PC-3 (cell line): ENCODE measurements at regions of chr4 and their contacts with region 1.

Region 1: DNA sequence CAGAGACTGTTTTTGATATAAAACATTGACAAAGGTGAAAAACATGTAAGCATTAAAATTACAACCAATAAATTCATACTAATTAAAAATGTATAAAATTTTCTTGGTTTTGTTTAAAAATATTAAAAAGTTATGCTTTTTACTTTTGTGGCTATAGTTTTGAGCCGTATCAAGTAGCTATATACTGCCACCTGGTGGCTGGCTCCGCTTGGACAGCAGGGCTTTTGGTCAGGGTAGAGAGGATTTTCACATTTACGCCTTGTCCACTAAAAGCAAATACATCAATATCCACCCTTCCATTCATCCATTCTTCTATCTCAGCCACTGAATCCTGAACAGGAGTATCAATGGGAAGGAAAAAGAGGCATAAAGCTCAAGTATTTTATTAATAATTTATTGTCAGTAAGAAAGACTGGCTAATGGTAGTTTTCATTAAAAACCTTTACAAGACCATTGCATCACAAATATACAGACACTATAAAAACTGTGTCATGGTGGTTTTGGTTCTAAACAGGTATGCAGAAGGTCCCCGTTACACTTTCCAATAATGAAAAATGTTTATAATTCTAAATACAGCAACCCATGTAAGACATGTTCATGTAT is 32.1 kb upstream of the MTNR1A start:
- DNase-seq: peak; percentile 54
- ATAC-seq: peak; percentile 65
- H3K4me3 ChIP-seq: no peak overlapping the region
- H3K27ac ChIP-seq: no peak overlapping the region
- H3K4me1 ChIP-seq: no peaks in the 10 kb centered on the region
- H3K27me3 ChIP-seq: no peaks in the 10 kb centered on the region
- CTCF ChIP-seq: peak; percentile 73

Region 2: GRCh38 chr4:186297013-186297645 is 290.4 kb before region 1 on chr4:
- CTCF ChIA-PET with region 1: interaction called, 3 read pairs
- POLR2A ChIA-PET with region 1: no interaction called
- intact Hi-C with region 1: loop called (anchors 1 kb)
- DNase-seq: peak; percentile 64
- ATAC-seq: peak; percentile 27; the same call in 1 of the 2 replicates
- H3K4me3 ChIP-seq: no peak overlapping the region
- H3K27ac ChIP-seq: no peak overlapping the region
- H3K4me1 ChIP-seq: no peaks in the 10 kb centered on the region
- H3K27me3 ChIP-seq: peaks cover 26% of the 10 kb centered on the region
- CTCF ChIP-seq: peak; percentile 69

Region 3: DNA sequence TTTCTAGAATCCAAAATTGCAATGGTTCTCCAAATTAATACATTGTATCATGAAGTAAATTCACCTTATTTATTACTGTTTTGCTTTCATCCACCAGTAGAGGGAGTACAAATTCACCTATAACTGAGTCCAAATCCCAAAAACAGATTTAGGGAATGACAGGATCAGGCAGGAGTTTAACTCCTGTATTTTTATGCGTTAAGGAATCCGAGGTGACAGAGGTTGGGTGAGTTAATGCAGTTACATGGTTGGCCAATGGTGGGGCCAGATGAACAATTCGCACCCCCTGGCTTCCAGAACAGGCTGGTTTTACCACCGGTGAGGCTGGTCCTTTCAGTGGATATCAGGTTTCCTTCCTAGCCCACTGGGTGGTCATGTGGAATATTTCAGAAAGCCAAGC is 114.6 kb before region 1 on chr4:
- CTCF ChIA-PET with region 1: no interaction called
- POLR2A ChIA-PET with region 1: no interaction called
- intact Hi-C with region 1: loop called (anchors 2 kb)
- DNase-seq: peak; percentile 52
- ATAC-seq: peak; percentile 27; the same call in 1 of the 2 replicates
- H3K4me3 ChIP-seq: no peak overlapping the region
- H3K27ac ChIP-seq: no peak overlapping the region
- H3K4me1 ChIP-seq: no peaks in the 10 kb centered on the region
- H3K27me3 ChIP-seq: no peaks in the 10 kb centered on the region
- CTCF ChIP-seq: peak; percentile 76

Region 4: DNA sequence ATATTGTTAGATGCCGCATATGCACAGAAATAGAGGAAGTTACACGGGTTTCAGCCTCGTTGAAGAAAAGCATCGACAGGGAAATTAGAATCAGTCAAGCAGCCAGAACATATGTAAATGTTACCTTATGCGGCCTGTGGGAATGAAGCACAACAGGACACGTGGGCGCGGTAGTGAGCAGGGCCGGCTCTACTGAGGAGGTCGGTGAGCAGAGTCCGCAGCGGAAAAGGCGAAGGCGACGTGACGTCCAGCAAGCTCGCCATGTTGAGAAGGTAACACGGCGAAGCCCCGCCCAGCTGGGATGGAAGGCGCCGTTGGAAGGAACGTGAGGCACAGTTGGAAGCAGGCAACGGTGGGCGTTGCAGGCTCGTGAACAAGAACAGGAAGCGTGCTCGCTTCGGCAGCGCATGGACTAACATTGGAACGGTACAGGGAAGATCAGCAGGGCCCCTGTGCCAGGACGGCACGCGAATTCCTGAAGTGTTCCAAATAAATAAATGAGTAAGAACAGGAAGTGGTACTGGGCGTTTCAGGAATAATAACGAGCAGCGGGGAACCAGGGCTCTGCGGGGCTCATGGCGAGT is 86.7 kb before region 1 on chr4:
- CTCF ChIA-PET with region 1: no interaction called
- POLR2A ChIA-PET with region 1: no interaction called
- intact Hi-C with region 1: no loop called
- DNase-seq: no peak
- ATAC-seq: no peak
- H3K4me3 ChIP-seq: no peak overlapping the region
- H3K27ac ChIP-seq: no peak overlapping the region
- H3K4me1 ChIP-seq: no peaks in the 10 kb centered on the region
- H3K27me3 ChIP-seq: peaks cover 10% of the 10 kb centered on the region; the same call in 1 of the 2 replicates
- CTCF ChIP-seq: no peak

Region 5: GRCh38 chr4:186606593-186606992 is 19.1 kb after region 1 on chr4:
- CTCF ChIA-PET with region 1: no interaction called
- POLR2A ChIA-PET with region 1: no interaction called
- intact Hi-C with region 1: no loop called
- DNase-seq: peak; percentile 3
- ATAC-seq: no peak
- H3K4me3 ChIP-seq: no peak overlapping the region
- H3K27ac ChIP-seq: no peak overlapping the region
- H3K4me1 ChIP-seq: no peaks in the 10 kb centered on the region
- H3K27me3 ChIP-seq: no peaks in the 10 kb centered on the region
- CTCF ChIP-seq: no peak

Region 6: DNA sequence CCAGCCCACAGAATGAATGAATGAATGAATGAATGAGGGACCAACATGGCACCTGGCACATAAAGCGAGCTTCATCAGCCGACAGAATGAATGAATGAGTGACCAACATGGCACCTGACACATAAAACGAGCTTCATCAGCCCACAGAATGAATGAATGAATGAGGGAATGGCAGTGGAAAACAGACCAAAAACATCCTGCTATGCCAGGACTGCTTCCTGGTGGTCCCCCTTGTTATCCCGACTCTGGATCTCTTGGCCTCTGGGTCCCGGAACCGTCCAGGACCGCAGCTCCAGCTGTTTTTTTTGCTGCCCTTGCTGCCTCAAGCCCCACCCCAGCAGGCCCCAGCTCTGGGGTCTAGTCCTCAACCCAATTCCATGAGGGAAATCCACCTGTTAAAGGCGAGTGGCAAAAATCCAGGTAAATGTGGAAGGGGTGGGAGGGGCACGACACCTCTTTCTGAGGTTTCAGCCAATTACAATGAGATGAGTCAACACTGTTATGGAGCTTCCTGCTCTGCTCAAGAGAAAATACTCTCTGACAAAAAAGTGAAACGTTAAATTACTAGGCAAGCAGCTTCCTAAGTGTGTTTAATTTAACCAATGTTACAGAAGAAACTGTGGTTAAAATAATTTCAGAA is 39.8 kb after region 1 on chr4:
- CTCF ChIA-PET with region 1: no interaction called
- POLR2A ChIA-PET with region 1: no interaction called
- intact Hi-C with region 1: no loop called
- DNase-seq: no peak
- ATAC-seq: no peak
- H3K4me3 ChIP-seq: no peak overlapping the region
- H3K27ac ChIP-seq: no peak overlapping the region
- H3K4me1 ChIP-seq: no peaks in the 10 kb centered on the region
- H3K27me3 ChIP-seq: no peaks in the 10 kb centered on the region
- CTCF ChIP-seq: no peak